ENCODE measurements at regions of chr14 and their contacts with region 1.

Region 1: DNA sequence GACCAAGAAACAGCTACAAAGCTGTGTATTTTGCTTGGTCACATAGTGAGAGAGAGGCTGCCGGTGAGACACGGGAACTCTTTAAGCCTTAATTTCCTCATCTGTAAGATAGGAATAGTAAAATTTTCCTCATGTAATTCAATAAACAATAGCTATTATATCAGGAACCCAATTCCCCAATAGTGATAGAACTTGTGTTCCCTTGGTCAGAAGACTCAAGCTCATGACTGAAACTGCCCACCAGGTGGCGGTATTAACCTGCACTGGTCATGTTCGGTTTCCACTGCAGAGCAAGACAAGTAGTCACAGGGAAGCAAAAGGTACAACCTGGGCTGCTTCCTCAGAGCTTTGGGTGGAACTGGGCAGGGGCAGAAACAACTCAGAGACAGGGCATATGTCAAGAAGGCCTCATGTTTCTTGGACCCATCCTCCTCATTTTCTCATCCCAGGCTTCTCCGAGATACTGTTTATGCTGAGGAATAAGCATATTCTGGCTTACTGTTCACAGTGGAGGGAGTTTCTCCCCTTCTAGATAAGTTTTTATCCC is 4.2 kb upstream of the AJUBA start:
- DNase-seq: peak; percentile 79

Region 2: GRCh38 chr14:22929104-22929847 is 57.3 kb before region 1 on chr14 and contains the start of gene PRMT5:
- CTCF ChIA-PET with region 1: interaction called, 10 read pairs
- POLR2A ChIA-PET with region 1: interaction called, 29 read pairs
- DNase-seq: peak; percentile 93

Region 3: DNA sequence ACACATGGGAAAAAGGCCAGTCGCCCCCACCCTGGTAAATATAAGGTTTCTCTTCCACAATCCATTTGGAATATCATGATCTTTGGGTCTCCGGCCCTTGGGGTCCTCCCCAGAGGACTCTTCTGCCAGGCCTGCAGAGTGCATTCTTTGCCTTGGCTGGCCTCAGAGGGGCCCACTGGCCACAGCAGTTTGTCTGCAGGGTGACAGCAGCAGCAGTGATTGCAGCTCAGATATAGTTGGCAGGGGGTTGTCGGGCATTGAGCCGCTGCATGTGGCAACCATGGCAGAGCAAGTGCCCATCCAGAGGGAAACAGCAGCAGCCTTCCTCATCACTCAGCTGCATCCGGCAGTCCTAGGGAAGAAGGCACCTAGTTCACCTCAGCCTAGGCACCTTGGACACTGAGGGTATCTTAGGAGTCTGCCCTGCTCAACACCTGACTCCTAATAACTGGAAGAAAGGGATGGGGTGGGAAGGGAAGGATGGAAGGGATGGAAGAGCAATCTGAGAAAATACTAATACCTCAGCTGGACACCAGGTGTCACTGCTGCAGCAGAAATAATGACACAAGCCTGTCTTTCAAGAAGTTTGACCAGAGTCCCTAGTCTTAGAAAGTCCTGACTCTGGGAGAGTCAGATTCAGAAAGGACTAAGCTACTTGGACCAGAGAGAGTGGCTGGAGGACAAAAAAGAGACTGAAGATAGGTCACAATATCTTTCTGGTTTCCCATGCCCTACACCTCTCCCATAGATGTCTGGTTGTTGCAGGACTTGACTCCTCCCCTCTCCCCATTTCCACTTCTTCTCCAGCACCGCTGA is 13.2 kb before region 1 on chr14:
- CTCF ChIA-PET with region 1: interaction called, 41 read pairs
- POLR2A ChIA-PET with region 1: interaction called, 56 read pairs
- DNase-seq: peak; percentile 61

Region 4: DNA sequence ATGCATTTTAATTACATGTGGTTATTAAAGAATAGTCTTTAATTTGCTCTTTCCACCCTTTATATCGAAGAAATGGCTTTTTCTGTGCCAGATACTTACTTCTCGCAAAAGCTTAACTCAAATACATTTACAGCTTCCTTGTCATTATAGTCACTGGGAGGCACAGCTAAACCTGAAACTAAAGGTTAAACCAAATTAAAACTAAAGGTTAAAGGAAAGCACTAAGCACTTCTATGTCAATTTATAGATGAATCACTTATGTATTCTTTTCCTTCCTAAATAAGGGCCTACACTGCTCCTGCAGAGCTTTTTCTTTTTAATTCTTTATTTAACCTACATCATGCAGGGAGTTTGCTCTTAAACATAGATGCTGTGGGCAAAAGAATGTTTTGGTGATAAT is 14.3 kb after region 1 on chr14:
- CTCF ChIA-PET with region 1: interaction called, 51 read pairs
- POLR2A ChIA-PET with region 1: interaction called, 24 read pairs
- DNase-seq: no peak

Region 5: GRCh38 chr14:23052182-23052623 is 65.6 kb after region 1 on chr14:
- CTCF ChIA-PET with region 1: interaction called, 159 read pairs
- POLR2A ChIA-PET with region 1: interaction called, 36 read pairs
- DNase-seq: no peak

Region 6: GRCh38 chr14:23057757-23058653 is 71.4 kb after region 1 on chr14:
- CTCF ChIA-PET with region 1: interaction called, 159 read pairs
- POLR2A ChIA-PET with region 1: interaction called, 36 read pairs
- DNase-seq: peak; percentile 87

Region 7: DNA sequence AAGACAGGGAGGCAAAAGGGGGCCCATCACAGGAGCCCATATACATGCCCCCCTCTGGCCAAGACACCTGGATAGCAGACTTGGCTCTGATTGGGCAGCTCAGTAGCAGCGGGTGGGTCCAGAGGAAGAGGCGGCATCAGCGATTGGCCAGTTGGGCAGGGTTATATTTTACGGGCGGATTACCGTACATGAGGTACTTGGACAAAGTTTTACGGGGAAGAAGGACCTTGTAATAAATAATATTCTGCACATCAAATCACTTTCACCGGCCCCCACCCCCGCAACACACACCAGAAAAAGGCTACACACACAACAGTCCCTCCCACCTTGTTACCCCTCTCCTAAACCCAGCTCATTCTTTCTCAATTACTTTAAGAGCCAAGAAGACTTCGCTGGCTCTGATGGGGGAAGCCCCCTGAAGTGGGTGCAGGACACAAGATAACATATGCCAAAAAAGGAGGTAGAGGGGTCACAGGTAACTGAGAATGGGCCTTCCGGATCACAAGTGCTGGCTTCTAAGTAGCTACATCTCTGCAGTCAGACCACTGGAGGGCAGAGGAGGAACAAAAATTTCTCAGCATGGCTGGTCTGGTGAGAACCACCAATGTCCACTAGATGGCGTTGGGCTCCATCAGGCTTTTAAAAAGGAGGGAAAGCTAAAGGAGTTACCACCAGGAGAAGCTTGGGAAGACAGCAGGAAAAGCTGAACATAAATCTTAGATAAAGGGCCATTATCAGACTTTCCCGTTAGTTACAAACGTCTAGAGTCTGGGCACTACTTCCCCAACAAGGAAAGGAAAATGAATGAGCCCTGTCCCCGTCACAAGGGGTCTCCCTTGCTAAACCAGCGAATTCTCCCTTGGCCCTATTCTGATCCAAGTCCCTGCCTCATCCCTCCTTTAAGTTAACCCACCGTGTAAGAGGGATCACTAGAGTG is 82.2 kb after region 1 on chr14:
- CTCF ChIA-PET with region 1: interaction called, 22 read pairs
- POLR2A ChIA-PET with region 1: interaction called, 8 read pairs
- DNase-seq: peak; percentile 83

Measured in HEK293T (cell line).